ENCODE measurements at regions of chr10 and their contacts with region 1.

Region 1: GRCh38 chr10:70461215-70461986 is 17.2 kb upstream of the PALD1 start:
- DNase-seq: peak in 4 of 5 donors; percentile 31 to 40 (median 32)
- H3K4me3 ChIP-seq: no peak overlapping the region
- H3K4me3 Mint-ChIP-seq: no peak overlapping the region
- H3K27ac ChIP-seq: no peak overlapping the region
- H3K27ac Mint-ChIP-seq: peak overlapping the region in 2 of 7 donors; percentile 35 to 64
- H3K4me1 ChIP-seq: peaks cover 10% of the 10 kb centered on the region
- H3K4me1 Mint-ChIP-seq: peaks cover 0 to 16% (median 1%) of the 10 kb centered on the region in 4 donors
- H3K27me3 ChIP-seq: peaks cover 11% of the 10 kb centered on the region
- H3K27me3 Mint-ChIP-seq: peaks cover 25 to 32% of the 10 kb centered on the region in 2 donors

Region 2: DNA sequence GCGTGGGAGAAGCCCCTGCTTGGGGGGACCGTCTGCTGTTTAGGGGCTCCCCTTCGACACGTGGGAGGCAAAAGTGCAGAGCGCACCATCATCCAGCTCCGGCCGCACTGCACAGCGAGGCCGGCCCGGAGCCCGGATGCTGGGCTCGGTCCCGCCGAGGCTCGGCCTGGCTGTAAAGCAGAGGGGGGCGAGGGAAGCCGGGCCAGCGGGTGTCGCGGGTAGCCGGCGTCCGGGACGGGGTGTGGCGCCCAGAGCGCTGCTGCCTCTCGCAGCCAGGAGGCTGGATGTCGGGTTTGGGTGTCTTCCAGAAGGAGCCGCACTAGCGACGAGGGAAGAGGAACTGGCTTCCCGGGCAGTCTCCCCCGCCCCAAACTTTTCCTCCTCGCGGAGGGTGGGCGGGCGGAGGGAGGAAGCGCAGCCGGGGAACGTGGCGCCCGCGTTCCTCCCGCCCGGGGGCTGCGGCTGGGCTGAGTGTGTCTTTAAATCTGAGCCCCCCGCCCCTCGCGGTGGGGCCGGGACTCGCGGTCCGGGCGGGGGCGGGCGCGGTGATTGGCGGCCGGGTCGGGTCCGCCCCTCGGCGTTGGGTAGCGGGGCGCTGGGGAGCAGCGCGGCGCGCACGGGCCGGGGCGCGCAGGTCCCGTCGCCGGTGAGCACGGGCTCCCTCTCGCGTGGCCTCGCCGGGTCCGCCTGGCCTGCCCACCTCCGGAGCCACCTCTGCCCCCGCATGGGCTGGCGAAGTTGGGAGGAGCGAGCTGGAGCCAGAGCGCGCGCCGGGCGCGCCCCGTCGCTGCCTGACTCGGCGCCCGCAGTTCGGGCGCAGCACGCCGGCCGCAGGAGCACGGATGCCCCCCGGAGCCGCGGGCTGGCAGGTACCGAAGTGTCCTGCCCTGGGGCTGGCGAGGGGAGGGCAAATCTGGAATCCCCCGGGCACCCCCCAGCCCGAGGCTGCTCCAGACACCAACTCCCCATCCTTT is 17.1 kb after region 1 on chr10 and contains the start of gene PALD1:
- CTCF ChIA-PET with region 1: interaction called, 4 read pairs
- POLR2A ChIA-PET with region 1: no interaction called
- intact Hi-C with region 1: loop called (anchors 1 kb)
- DNase-seq: peak in 3 of 5 donors; percentile 17 to 51 (median 22)
- H3K4me3 ChIP-seq: peak within 1 kb of the TSS in 1 of 2 donors; percentile 33
- H3K4me3 Mint-ChIP-seq: peak within 1 kb of the TSS; percentile 79 to 92 (median 80)
- H3K27ac ChIP-seq: no peak within 1 kb of the TSS
- H3K27ac Mint-ChIP-seq: peak within 1 kb of the TSS; percentile 68 to 95 (median 89)
- H3K4me1 ChIP-seq: peaks cover 50% of the 10 kb centered on the region
- H3K4me1 Mint-ChIP-seq: peaks cover 27 to 58% (median 45%) of the 10 kb centered on the region in 4 donors
- H3K27me3 ChIP-seq: no peaks in the 10 kb centered on the region
- H3K27me3 Mint-ChIP-seq: peaks cover 1 to 2% of the 10 kb centered on the region in 2 donors
- total RNA-seq, gene PALD1: not detected

Region 3: GRCh38 chr10:70540089-70540788 is 78.8 kb after region 1 on chr10:
- CTCF ChIA-PET with region 1: interaction called, 38 read pairs
- POLR2A ChIA-PET with region 1: no interaction called
- intact Hi-C with region 1: no loop called
- DNase-seq: peak in 1 of 5 donors; percentile 10
- H3K4me3 ChIP-seq: no peak overlapping the region
- H3K4me3 Mint-ChIP-seq: no peak overlapping the region
- H3K27ac ChIP-seq: no peak overlapping the region
- H3K27ac Mint-ChIP-seq: peak overlapping the region in 1 of 7 donors; percentile 15
- H3K4me1 ChIP-seq: no peaks in the 10 kb centered on the region
- H3K4me1 Mint-ChIP-seq: no peaks in the 10 kb centered on the region
- H3K27me3 ChIP-seq: no peaks in the 10 kb centered on the region
- H3K27me3 Mint-ChIP-seq: no peaks in the 10 kb centered on the region

Region 4: DNA sequence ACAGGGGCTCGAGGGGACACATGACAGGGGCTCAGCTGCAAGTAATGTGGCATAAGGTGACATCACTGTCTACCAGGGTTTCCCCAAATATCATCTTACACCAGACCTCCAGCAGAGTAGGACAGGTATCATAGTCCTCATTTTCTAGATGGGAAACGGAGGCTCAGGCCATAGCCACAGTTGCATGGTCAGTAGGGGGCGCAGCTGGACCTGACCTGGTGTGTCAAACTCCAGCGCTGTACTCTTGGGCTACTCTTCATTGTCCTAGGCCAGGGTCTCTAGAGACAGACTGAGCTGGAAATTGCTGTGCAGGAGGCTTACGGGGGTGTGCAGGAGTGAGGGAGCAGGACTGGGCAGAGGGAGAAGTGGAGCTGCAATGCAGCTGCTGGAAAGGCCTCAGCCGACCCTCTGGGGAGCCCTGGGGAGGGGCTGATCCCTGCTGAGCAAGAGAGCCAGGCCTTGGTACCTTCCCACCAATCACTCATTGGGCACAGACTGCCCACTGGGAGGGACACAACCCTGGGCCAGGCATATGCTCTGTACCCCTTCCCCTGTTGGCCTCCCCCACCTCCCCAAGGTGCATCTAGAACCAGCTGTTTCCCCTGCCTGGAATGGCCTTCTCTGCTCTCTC is 1025.2 kb after region 1 on chr10:
- CTCF ChIA-PET with region 1: no interaction called
- POLR2A ChIA-PET with region 1: no interaction called
- intact Hi-C with region 1: no loop called
- DNase-seq: peak in 3 of 5 donors; percentile 7 to 44 (median 8)
- H3K4me3 ChIP-seq: no peak overlapping the region
- H3K4me3 Mint-ChIP-seq: no peak overlapping the region
- H3K27ac ChIP-seq: no peak overlapping the region
- H3K27ac Mint-ChIP-seq: no peak overlapping the region
- H3K4me1 ChIP-seq: no peaks in the 10 kb centered on the region
- H3K4me1 Mint-ChIP-seq: no peaks in the 10 kb centered on the region
- H3K27me3 ChIP-seq: no peaks in the 10 kb centered on the region
- H3K27me3 Mint-ChIP-seq: peaks cover 7 to 9% of the 10 kb centered on the region in 2 donors

Measured in CD4-positive, alpha-beta memory T cell (primary cell).